ENCODE measurements at regions of chr6 and their contacts with region 1.

Region 1: GRCh38 chr6:158649289-158650143 is at the start of gene SYTL3:
- DNase-seq: peak in 13 of 14 experiments; percentile 39 to 95 (median 70)
- ATAC-seq: peak; percentile 60
- H3K4me3 ChIP-seq: peak within 1 kb of the TSS; percentile 43
- H3K4me3 Mint-ChIP-seq: peak within 1 kb of the TSS; percentile 85
- H3K27ac ChIP-seq: peak within 1 kb of the TSS; percentile 60
- H3K27ac Mint-ChIP-seq: peak within 1 kb of the TSS; percentile 91
- H3K4me1 ChIP-seq: peaks cover 67% of the 10 kb centered on the region
- H3K4me1 Mint-ChIP-seq: peaks cover 60% of the 10 kb centered on the region
- H3K27me3 ChIP-seq: no peaks in the 10 kb centered on the region
- H3K27me3 Mint-ChIP-seq: no peaks in the 10 kb centered on the region
- CTCF ChIP-seq: no peak
- total RNA-seq, gene SYTL3: 41.2 to 42.7 TPM

Region 2: GRCh38 chr6:158559895-158560835 is 89.4 kb before region 1 on chr6 and contains the start of gene TMEM181:
- CTCF ChIA-PET with region 1: no interaction called
- POLR2A ChIA-PET with region 1: interaction called, 3 read pairs
- intact Hi-C with region 1: loop called in 1 of 2 experiments (anchors 10 kb)
- DNase-seq: peak; percentile 76 to 96 (median 86)
- ATAC-seq: peak; percentile 91
- H3K4me3 ChIP-seq: peak within 1 kb of the TSS; percentile 79
- H3K4me3 Mint-ChIP-seq: peak within 1 kb of the TSS; percentile 96
- H3K27ac ChIP-seq: peak within 1 kb of the TSS; percentile 59 to 78
- H3K27ac Mint-ChIP-seq: peak within 1 kb of the TSS; percentile 87
- H3K4me1 ChIP-seq: peaks cover 52% of the 10 kb centered on the region
- H3K4me1 Mint-ChIP-seq: peaks cover 48% of the 10 kb centered on the region
- H3K27me3 ChIP-seq: no peaks in the 10 kb centered on the region
- H3K27me3 Mint-ChIP-seq: no peaks in the 10 kb centered on the region
- CTCF ChIP-seq: no peak
- total RNA-seq, gene TMEM181: 10.2 to 10.9 TPM

Region 3: DNA sequence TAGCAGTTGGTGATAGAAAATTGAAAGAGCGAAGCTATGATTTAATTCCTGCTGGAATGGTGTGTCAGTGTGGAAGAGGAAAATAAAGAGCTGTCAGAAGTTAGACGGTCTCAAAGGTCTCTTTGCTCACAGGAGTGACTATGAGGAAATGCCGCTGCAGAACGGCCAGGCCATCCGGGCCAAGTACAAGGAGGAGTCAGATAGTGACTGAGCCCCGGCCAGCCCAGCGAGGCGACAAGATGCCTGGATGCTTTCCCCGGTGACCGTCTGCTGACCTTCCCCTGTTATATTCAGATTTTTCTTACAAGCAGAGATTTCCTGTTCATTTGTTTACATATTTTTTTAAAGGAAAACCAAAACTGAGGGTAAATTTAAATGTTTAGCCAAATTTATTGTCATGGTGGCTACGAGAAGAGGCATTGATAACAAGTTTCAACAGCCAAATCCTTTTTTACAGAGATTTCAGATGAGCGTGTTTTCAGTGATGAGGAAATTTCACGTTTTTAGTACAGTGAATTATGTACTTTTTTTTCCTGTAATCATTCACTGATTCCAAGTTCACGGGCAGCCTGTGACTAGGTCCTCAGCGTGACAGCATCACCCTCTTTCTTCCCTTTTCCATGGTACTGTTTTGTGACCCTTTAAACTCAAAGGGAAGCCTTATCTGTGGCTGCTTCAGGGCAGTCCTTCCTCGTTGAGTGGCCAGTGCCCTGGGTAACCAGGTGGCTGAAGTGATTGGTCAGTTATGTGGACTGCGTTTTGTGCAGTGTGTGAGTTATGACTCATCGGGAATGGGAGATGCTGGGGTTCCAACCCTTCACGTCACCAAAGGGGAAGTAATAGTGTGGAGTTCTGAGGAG is 17.6 kb before region 1 on chr6:
- CTCF ChIA-PET with region 1: interaction called, 5 read pairs
- POLR2A ChIA-PET with region 1: interaction called, 14 read pairs
- intact Hi-C with region 1: loop called in 1 of 2 experiments (anchors 1 kb)
- DNase-seq: peak in 2 of 14 experiments; percentile 44 to 52
- ATAC-seq: no peak
- H3K4me3 ChIP-seq: no peak overlapping the region
- H3K4me3 Mint-ChIP-seq: no peak overlapping the region
- H3K27ac ChIP-seq: peak overlapping the region; percentile 15 to 26
- H3K27ac Mint-ChIP-seq: peak overlapping the region; percentile 79
- H3K4me1 ChIP-seq: peaks cover 29% of the 10 kb centered on the region
- H3K4me1 Mint-ChIP-seq: peaks cover 49% of the 10 kb centered on the region
- H3K27me3 ChIP-seq: no peaks in the 10 kb centered on the region
- H3K27me3 Mint-ChIP-seq: no peaks in the 10 kb centered on the region
- CTCF ChIP-seq: no peak

Region 4: DNA sequence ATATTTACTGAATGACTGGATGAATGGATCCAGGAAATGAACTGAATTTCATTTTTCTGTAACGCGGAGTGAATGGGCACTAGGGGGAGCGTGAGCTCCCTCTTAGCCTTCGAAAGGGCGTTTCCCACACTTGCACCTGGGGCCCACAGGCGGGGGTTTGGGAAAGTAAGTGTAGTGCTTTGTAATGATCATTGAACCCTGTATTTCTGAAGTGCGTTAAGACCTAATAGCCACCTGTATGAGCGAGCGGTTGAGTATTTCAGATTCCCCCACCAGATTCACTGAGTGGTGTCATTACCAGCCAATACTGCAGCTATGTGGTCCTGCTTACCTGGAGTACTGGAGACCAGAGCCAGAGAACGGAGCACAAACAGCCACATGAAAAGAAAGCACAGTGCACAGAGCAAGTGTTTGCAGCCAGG is 10.8 kb after region 1 on chr6:
- CTCF ChIA-PET with region 1: interaction called, 14 read pairs
- POLR2A ChIA-PET with region 1: interaction called, 71 read pairs
- intact Hi-C with region 1: no loop called
- DNase-seq: peak in 13 of 14 experiments; percentile 25 to 83 (median 53)
- ATAC-seq: peak; percentile 81
- H3K4me3 ChIP-seq: no peak overlapping the region
- H3K4me3 Mint-ChIP-seq: peak overlapping the region; percentile 38
- H3K27ac ChIP-seq: no peak overlapping the region
- H3K27ac Mint-ChIP-seq: peak overlapping the region; percentile 84
- H3K4me1 ChIP-seq: peaks cover 32% of the 10 kb centered on the region
- H3K4me1 Mint-ChIP-seq: peaks cover 52% of the 10 kb centered on the region
- H3K27me3 ChIP-seq: no peaks in the 10 kb centered on the region
- H3K27me3 Mint-ChIP-seq: no peaks in the 10 kb centered on the region
- CTCF ChIP-seq: peak; percentile 83

Region 5: DNA sequence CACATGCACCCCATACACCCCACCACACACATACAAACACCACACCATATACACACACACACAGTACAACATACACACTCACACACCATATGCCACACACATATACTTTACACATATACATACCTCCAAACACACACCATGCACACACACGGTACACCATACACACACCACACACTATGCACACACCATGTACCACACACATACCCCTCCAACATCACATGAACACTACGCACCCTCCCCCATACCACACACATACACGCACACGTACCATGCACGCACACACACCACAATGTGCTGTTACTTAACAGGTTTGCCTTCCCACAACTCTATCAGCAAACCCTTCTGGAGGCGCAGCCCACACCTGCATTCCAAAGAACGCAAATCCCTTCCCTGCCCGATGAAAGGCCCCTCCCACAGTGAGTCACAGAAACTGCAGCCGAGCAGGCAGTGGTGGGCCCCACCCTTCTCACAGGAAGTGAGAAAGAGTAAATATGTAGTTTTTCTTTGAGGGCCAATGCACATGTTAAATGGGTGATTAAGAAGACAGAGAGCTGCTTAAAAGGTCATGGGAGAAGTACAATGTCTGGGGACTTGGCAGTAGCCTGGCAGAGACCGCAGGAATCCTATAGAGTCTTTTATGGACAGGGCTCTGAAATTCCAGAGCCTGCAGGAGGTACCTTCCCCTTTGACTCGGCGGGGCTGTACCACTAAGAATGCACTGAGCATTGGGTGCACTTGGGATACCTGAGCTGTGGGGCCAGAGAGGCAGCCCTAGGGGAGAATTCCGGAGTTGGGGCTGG is 203.8 kb after region 1 on chr6:
- CTCF ChIA-PET with region 1: no interaction called
- POLR2A ChIA-PET with region 1: no interaction called
- intact Hi-C with region 1: loop called in 1 of 2 experiments (anchors 5 kb)
- DNase-seq: peak; percentile 73 to 97 (median 86)
- ATAC-seq: peak; percentile 70
- H3K4me3 ChIP-seq: peak overlapping the region; percentile 53
- H3K4me3 Mint-ChIP-seq: no peak overlapping the region
- H3K27ac ChIP-seq: peak overlapping the region; percentile 86 to 97
- H3K27ac Mint-ChIP-seq: no peak overlapping the region
- H3K4me1 ChIP-seq: peaks cover 67% of the 10 kb centered on the region
- H3K4me1 Mint-ChIP-seq: peaks cover 27% of the 10 kb centered on the region
- H3K27me3 ChIP-seq: no peaks in the 10 kb centered on the region
- H3K27me3 Mint-ChIP-seq: no peaks in the 10 kb centered on the region
- CTCF ChIP-seq: no peak

Measured in CD4-positive, alpha-beta T cell (primary cell).